Cardiac septum (tissue), 1 donor: ENCODE measurements at regions of chr14 and their contacts with region 1.

Region 1: GRCh38 chr14:30521899-30522736 is 36.8 kb upstream of the G2E3 start:
- DNase-seq: no peak

Region 2: DNA sequence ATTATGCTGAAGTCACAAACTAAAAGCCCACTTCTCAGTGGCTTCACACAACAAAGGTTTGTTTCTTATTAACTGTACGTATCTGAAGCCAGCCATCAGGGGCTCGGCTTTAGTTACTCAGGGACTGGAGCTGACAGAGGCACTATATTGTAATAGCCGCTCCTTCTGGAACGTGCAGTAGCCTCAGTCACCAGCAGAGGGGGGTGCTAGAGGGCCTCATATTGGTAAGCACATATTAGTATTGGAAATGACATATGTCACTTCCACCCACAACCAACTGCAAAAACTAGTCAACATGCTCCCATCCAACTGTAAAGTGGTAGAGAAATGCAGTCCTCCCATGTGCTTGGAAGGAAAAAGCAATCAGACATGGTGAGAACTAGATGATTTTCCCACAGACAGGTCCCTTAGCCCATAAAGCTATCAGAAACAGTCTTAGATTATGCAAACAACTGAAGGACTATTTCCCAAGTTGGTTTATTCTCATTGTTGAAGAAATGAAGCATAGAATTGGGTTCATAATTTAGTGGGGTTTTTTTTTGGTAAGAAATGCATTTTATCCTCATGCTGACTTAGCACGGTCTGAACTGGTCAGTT is 146.7 kb before region 1 on chr14:
- intact Hi-C with region 1: loop called (anchors 10 kb)
- DNase-seq: no peak

Region 3: GRCh38 chr14:30558675-30559555 is 36.8 kb after region 1 on chr14 and contains the start of gene G2E3:
- intact Hi-C with region 1: no loop called
- DNase-seq: peak; percentile 96
- total RNA-seq, gene G2E3: 9.5 TPM